Heart left ventricle (tissue), 16 donors: ENCODE measurements at regions of chr18 and their contacts with region 1.

Region 1: DNA sequence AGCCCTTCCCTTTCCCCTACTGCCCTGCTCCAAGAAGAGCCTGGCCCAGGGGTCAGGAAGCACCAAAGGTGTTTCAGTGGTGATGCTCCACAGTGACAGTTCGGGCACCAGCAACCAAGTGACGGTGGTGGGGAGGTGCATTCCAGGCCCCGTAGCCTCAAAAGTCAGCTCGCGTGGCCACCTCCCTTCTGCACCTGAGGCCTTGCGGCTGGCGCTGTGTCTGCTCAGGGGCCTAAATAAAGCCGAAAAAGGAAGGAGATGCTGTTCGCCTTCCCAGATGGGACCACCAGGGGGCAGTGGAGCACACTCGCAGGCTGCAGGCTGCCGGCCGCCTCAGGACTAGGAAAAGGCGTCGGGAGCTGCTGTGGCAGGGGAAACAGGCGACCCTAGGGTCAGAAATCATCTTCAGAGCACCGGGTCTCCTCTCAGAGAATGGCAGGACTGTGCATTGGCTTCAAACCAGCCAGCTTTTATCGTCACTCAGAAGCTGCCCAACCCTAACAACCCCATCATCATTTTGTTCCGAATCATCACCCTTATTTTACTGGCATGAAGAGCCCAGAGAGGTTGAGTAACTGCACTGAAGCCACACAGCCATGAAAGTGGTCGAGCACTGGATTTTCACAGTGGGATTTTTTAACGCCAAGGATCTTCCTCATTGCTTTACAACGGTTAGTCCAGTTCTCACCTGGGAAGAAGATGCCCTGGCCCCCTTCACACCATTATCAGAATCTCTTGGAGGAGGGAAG is 213.0 kb upstream of the CELF4 start:
- DNase-seq: peak; percentile 34 to 73 (median 53)
- ATAC-seq: peak in 3 of 4 donors; percentile 52 to 63 (median 56)
- H3K4me3 ChIP-seq: no peak overlapping the region
- H3K27ac ChIP-seq: no peak overlapping the region
- H3K4me1 ChIP-seq: no peaks in the 10 kb centered on the region
- H3K27me3 ChIP-seq: no peaks in the 10 kb centered on the region
- CTCF ChIP-seq: peak; percentile 56 to 76 (median 66)
- POLR2A ChIP-seq: no peak

Region 2: GRCh38 chr18:37553633-37554395 is 224.8 kb before region 1 on chr18:
- intact Hi-C with region 1: loop called in 1 of 10 experiments (anchors 10 kb)
- DNase-seq: no peak
- ATAC-seq: peak in 1 of 4 donors; percentile 48
- H3K4me3 ChIP-seq: no peak overlapping the region
- H3K27ac ChIP-seq: no peak overlapping the region
- H3K4me1 ChIP-seq: no peaks in the 10 kb centered on the region
- H3K27me3 ChIP-seq: peaks cover 0 to 37% (median 3%) of the 10 kb centered on the region in 9 donors
- CTCF ChIP-seq: peak in 3 of 12 donors; percentile 22 to 28 (median 23)
- POLR2A ChIP-seq: no peak

Region 3: DNA sequence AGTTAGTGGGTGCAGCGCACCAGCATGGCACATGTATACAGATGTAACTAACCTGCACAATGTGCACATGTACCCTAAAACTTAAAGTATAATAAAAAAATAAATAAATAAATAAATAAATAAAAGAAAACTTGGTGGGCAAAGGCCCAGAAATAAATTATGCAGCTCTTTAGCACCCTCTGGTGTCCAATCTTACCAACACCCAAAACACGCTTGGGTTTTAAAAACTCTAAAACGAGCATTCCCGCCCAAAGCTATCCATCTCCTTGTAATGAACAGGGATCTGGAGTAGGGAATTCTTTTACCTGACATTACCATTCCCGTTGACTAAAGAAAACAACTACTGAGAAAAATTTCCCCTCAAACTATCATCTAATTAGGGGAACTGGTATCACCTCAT is 1792.9 kb after region 1 on chr18:
- intact Hi-C with region 1: loop called in 1 of 10 experiments (anchors 10 kb)
- DNase-seq: no peak
- ATAC-seq: no peak
- H3K4me3 ChIP-seq: no peak overlapping the region
- H3K27ac ChIP-seq: no peak overlapping the region
- H3K4me1 ChIP-seq: no peaks in the 10 kb centered on the region
- H3K27me3 ChIP-seq: no peaks in the 10 kb centered on the region
- CTCF ChIP-seq: peak in 10 of 12 donors; percentile 14 to 47 (median 30)
- POLR2A ChIP-seq: no peak